Activated CD4-positive, alpha-beta T cell treated with anti-CD3 and anti-CD28 coated beads for 36 hours (primary cell): ENCODE measurements at regions of chr14 and their contacts with region 1.

Region 1: DNA sequence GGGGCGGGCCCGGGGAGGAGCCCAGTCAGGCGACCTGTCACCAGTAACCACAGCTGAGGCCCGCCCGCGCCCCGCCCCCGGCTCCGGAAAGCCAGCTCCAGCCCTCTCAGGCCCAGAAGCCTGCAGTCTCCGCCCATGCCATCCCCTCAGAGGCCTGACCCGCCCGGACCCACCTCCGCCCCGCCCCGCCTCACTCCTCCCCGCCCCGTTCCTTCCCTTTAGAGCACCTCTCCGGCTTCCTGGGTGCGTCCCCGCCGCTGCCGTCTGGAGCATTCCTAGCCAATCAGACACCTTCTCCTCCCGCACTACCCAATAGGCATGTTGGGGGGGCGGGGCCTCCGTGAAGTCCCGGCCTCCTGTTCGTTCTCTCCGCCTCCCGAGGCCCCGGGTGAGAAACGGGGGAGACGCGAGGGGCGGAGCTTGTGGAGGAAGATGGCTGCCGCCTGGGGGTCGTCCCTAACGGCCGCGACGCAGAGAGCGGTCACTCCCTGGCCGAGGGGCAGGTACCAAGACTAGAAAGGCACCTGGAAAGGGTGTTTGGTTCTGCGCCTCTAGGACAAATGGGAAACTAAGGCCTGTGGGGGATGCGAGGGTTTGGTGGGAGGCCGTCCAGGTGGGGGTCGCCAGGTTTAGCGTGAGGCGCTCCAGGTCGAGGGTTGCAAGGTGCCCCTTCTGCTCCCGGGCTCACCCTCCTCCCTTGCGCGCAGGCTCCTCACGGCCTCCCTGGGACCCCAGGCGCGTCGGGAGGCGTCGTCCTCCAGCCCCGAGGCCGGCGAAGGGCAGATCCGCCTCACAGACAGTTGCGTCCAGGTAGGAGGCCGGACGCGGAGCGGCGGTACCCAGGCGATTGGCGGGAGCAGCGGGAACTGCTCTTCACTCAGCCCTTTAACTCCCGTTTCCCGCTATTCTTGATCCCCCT is at the start of gene ISCA2:
- DNase-seq: peak; percentile 100
- ATAC-seq: peak; percentile 96
- H3K4me3 Mint-ChIP-seq: no peak within 1 kb of the TSS
- H3K27ac Mint-ChIP-seq: peak within 1 kb of the TSS; percentile 89
- H3K4me1 Mint-ChIP-seq: peaks cover 23% of the 10 kb centered on the region
- H3K27me3 Mint-ChIP-seq: no peaks in the 10 kb centered on the region
- total RNA-seq, gene ISCA2: 29.5 to 35.9 TPM

Region 2: DNA sequence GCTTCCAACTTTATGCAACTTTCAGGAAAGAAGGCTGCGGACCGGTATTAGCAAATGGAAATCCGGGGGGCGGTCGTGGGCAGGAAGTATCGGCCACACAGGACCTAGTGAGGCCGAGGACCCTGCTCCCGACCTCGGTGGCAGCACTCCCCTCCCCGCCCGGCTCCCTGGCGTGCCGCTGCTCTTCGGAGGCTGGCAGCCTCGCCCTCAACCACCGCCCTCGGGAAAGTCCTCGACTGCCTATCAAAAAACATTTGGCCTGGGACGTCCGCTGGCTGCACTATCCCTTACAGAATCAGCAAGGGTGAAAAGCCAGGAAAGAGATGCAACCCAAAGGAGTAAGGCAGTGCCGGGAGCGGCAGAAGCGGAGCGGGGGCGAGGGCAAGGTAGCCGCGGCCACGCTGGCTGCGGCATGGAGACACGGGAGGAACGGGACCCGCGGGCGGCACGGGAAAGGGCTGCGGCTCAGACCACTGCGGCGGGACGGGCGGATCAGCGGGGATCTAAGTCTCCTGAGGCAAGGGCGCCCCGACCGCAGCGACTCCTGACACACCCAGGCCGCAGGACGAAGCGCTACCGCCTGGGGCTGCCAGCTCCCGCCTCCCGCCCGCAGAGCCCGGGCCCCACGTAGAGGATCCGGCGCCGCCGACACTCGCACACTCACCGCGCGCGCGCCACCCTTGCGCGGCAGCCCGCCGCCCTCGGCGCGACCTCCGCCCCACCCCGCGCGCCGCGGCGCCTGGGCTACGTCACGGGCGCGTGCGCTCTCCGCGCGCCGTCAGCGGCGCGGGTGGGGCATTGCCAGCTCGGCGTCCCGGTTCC is 474.8 kb before region 1 on chr14 and contains the starts of genes BBOF1 and ENTPD5:
- CTCF ChIA-PET with region 1: no interaction called
- POLR2A ChIA-PET with region 1: no interaction called
- intact Hi-C with region 1: loop called in 1 of 2 experiments (anchors 1 kb)
- DNase-seq: peak; percentile 90
- ATAC-seq: peak; percentile 93
- H3K4me3 Mint-ChIP-seq: peak within 1 kb of the TSS; percentile 80
- H3K27ac Mint-ChIP-seq: peak within 1 kb of the TSS; percentile 93
- H3K4me1 Mint-ChIP-seq: peaks cover 12% of the 10 kb centered on the region
- H3K27me3 Mint-ChIP-seq: no peaks in the 10 kb centered on the region
- total RNA-seq, gene BBOF1: 1.9 to 2.1 TPM
- total RNA-seq, gene ENTPD5: 8.7 to 10.0 TPM

Region 3: GRCh38 chr14:74362361-74362915 is 131.2 kb before region 1 on chr14:
- CTCF ChIA-PET with region 1: interaction called, 5 read pairs
- POLR2A ChIA-PET with region 1: no interaction called
- intact Hi-C with region 1: loop called (anchors 1 to 2 kb)
- DNase-seq: peak; percentile 80
- ATAC-seq: peak; percentile 79
- H3K4me3 Mint-ChIP-seq: no peak overlapping the region
- H3K27ac Mint-ChIP-seq: no peak overlapping the region
- H3K4me1 Mint-ChIP-seq: no peaks in the 10 kb centered on the region
- H3K27me3 Mint-ChIP-seq: peaks cover 9% of the 10 kb centered on the region

Region 4: DNA sequence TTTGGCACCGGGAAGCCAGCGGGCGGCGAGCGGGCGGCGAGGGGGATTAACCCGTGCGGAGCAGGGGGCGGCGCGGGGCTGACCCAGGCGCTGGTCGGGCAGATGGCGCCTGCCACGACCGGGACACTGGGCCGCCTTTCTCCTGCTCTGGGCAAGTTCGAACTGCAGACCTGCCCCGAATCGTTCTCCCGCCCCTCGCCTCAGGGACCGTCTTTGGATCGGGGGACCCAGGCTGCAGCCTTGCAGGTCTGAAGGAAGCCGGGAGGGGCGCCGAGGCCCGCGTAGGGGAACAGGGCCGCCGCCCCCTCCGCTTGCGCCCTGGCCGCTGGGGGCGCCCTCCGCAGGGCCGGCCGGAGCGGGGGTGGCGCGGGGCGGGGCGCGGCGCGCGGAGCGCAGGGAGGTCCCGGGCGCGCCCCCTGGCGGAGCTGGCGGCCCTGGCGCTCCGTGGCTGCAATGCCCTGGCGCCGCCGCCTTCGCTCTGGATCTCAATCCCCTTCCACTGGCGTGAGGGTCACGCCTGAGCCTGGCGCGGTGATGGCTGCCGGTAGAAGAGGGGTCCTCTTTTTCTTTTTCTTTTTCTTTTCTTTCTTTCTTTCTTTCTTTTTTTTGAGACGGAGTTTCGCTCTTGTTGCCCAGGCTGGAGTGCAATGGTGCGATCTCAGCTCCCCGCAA is 118.9 kb after region 1 on chr14:
- CTCF ChIA-PET with region 1: interaction called, 9 read pairs
- POLR2A ChIA-PET with region 1: interaction called, 3 read pairs
- intact Hi-C with region 1: loop called in 1 of 2 experiments (anchors 1 kb)
- DNase-seq: peak; percentile 91
- ATAC-seq: peak; percentile 86
- H3K4me3 Mint-ChIP-seq: peak overlapping the region; percentile 62
- H3K27ac Mint-ChIP-seq: no peak overlapping the region
- H3K4me1 Mint-ChIP-seq: peaks cover 25% of the 10 kb centered on the region
- H3K27me3 Mint-ChIP-seq: peaks cover 15% of the 10 kb centered on the region

Region 5: DNA sequence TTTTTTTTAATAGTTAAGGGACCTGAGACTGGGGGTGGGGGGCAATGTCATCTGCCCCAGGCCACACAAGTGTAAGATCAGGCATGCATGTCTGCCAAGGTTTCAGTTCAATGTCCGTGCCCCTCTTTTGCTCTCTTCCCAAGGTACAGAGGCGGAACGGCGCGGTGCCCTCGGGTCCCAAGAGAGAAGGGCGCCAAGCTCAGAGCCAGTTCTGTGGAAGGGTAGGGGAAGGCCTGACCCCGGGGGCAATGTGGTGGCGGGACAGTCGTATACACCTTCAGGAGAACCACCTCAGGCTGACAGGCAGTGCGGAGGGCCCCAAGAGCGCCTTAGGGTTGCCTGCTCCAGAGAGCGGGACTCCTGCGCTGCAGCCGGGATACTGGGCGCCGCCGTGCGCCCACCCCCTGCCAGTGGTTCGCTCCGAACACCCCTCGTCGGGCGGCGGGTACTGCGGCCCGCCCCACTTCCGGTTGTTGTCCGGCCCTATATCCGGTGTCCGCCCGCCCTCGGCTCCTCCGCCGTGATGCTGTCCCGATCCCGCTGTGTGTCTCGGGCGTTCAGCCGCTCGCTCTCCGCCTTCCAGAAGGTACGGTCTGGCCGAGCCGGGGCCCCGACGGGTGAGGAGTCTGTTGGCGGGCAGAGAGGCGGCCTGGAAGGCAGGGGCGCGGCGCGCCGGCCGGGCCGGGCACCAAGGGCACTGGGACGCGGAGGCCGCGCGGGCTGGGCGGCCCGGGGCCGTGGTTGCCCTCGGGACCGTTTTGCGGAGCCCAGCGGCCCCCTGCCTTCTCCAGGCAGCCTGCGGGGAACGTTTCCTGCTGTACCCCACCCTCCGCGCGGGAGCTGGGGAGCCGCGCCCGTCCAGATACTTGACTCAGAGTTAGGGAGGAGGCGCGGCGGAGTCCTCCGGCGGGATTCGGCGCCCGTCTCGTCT is 388.1 kb after region 1 on chr14 and contains the start of gene DLST:
- CTCF ChIA-PET with region 1: no interaction called
- POLR2A ChIA-PET with region 1: interaction called, 3 read pairs
- intact Hi-C with region 1: loop called in 1 of 2 experiments (anchors 1 kb)
- DNase-seq: peak; percentile 92
- ATAC-seq: peak; percentile 89
- H3K4me3 Mint-ChIP-seq: peak within 1 kb of the TSS; percentile 99
- H3K27ac Mint-ChIP-seq: peak within 1 kb of the TSS; percentile 96
- H3K4me1 Mint-ChIP-seq: peaks cover 64% of the 10 kb centered on the region
- H3K27me3 Mint-ChIP-seq: no peaks in the 10 kb centered on the region
- total RNA-seq, gene DLST: 103 to 120 TPM